Ovary (tissue), 10 donors: ENCODE measurements at regions of chr4 and their contacts with region 1.

Region 1: GRCh38 chr4:121869841-121870656 is at the start of gene BBS7:
- DNase-seq: peak; percentile 98 to 99 (median 99)
- H3K4me3 ChIP-seq: peak within 1 kb of the TSS; percentile 90
- H3K27ac ChIP-seq: peak within 1 kb of the TSS; percentile 85 to 91
- H3K4me1 ChIP-seq: no peaks in the 10 kb centered on the region
- H3K27me3 ChIP-seq: no peaks in the 10 kb centered on the region
- CTCF ChIP-seq: no peak
- EP300 ChIP-seq: no peak
- POLR2A ChIP-seq: peak; percentile 91
- total RNA-seq, gene BBS7: 13.5 to 21.2 (median 19.4) TPM

Region 2: GRCh38 chr4:121696581-121697461 is 173.2 kb before region 1 on chr4 and contains the start of gene ANXA5:
- intact Hi-C with region 1: loop called in 1 of 4 experiments (anchors 5 kb)
- DNase-seq: peak; percentile 88 to 94 (median 90)
- H3K4me3 ChIP-seq: peak within 1 kb of the TSS; percentile 78
- H3K27ac ChIP-seq: peak within 1 kb of the TSS; percentile 92 to 96
- H3K4me1 ChIP-seq: peaks cover 9% of the 10 kb centered on the region
- H3K27me3 ChIP-seq: no peaks in the 10 kb centered on the region
- CTCF ChIP-seq: peak in 2 of 3 donors; percentile 46 to 49
- EP300 ChIP-seq: no peak
- POLR2A ChIP-seq: peak; percentile 71
- total RNA-seq, gene ANXA5: 130 to 296 (median 261) TPM